ENCODE measurements at regions of chr12 and their contacts with region 1.

Region 1: DNA sequence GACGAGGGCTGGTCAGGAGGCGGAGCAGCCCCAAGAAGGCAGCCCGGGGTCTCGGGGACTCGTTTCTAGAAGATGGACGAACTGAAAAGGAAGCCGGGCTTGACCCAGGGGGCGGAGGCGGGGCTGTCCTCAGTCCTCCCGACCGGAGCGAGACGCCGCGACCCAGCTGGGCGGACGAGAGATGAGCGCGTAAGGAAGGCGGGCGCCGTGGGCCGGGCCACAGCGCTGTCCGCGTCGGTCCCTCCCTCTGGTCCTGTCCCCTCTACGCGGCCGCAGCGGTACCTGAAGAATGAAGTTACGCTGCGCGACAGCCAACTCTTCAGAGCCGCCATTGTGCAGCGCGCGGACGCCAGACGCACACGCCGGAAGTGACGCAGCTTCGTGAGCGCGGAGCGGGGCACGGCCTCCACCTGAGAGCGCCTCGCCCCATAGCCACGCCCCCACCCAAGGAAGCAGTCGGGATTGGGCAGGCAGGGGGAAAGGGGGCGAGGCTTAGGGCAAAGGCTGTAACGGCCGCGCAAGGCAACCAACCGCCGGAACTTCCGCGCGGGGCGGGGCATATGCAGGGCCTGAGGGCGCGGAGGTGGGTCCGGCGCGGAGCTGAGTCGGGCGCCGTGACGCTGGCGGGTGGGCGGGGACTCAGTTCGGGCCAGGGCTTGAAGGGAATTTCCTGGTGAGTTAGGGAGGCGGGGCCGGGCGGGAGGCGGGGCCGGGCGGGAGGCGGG is at the start of gene DIABLO:
- DNase-seq: peak; percentile 99 to 100 (median 100)

Region 2: GRCh38 chr12:122265931-122266771 is 40.3 kb after region 1 on chr12 and contains the start of gene VPS33A:
- intact Hi-C with region 1: loop called (anchors 5 kb)
- DNase-seq: peak; percentile 92 to 99 (median 97)